Endothelial cell of umbilical vein (primary cell): ENCODE measurements at regions of chr16 and their contacts with region 1.

Region 1: GRCh38 chr16:77877712-77878347 is 89.5 kb downstream of the VAT1L start:
- DNase-seq: peak; percentile 61
- H3K4me3 ChIP-seq: no peak overlapping the region
- H3K27ac ChIP-seq: peak overlapping the region; percentile 67
- H3K4me1 ChIP-seq: peaks cover 9% of the 10 kb centered on the region
- H3K27me3 ChIP-seq: no peaks in the 10 kb centered on the region
- CTCF ChIP-seq: no peak
- POLR2A ChIP-seq: no peak

Region 2: GRCh38 chr16:77555791-77556190 is 322.0 kb before region 1 on chr16:
- CTCF ChIA-PET with region 1: no interaction called
- POLR2A ChIA-PET with region 1: no interaction called
- dilution Hi-C with region 1: no loop called
- intact Hi-C with region 1: no loop called
- DNase-seq: no peak
- H3K4me3 ChIP-seq: no peak overlapping the region
- H3K27ac ChIP-seq: no peak overlapping the region
- H3K4me1 ChIP-seq: no peaks in the 10 kb centered on the region
- H3K27me3 ChIP-seq: no peaks in the 10 kb centered on the region
- CTCF ChIP-seq: no peak
- POLR2A ChIP-seq: no peak

Region 3: GRCh38 chr16:77833921-77834634 is 43.8 kb before region 1 on chr16:
- CTCF ChIA-PET with region 1: interaction called, 3 read pairs
- POLR2A ChIA-PET with region 1: interaction called, 5 read pairs
- dilution Hi-C with region 1: no loop called
- intact Hi-C with region 1: loop called (anchors 1 kb)
- DNase-seq: peak; percentile 89
- H3K4me3 ChIP-seq: no peak overlapping the region
- H3K27ac ChIP-seq: peak overlapping the region; percentile 99
- H3K4me1 ChIP-seq: peaks cover 14% of the 10 kb centered on the region
- H3K27me3 ChIP-seq: no peaks in the 10 kb centered on the region
- CTCF ChIP-seq: no peak
- POLR2A ChIP-seq: peak; percentile 53

Region 4: DNA sequence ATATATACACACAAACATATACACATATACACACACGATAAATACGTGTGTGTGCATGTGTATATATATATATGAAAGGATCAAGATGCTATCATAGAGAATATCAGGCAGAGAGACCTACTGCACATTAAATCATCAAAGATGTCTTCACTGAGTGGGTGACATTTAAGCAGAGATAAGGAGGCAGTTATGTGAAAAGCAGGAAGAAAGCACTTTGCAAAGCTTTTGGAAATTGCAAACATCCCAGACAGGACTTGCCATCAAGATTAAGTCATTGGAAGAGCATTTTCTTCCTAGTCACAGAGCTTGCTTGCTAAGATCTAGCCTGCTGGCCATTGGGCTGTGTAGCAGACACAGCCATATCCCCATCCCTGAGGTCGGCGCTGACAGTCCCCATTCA is 33.0 kb before region 1 on chr16:
- CTCF ChIA-PET with region 1: no interaction called
- POLR2A ChIA-PET with region 1: no interaction called
- dilution Hi-C with region 1: no loop called
- intact Hi-C with region 1: no loop called
- DNase-seq: no peak
- H3K4me3 ChIP-seq: no peak overlapping the region
- H3K27ac ChIP-seq: no peak overlapping the region
- H3K4me1 ChIP-seq: no peaks in the 10 kb centered on the region
- H3K27me3 ChIP-seq: peaks cover 2 to 11% of the 10 kb centered on the region in 2 experiments
- CTCF ChIP-seq: no peak
- POLR2A ChIP-seq: no peak